ENCODE measurements at regions of chr7 and their contacts with region 1.

Region 1: GRCh38 chr7:31122649-31123058 is 70.5 kb downstream of the ADCYAP1R1 start:
- DNase-seq: peak; percentile 86
- H3K4me3 ChIP-seq: no peak overlapping the region
- H3K27ac ChIP-seq: no peak overlapping the region
- H3K4me1 ChIP-seq: peaks cover 0 to 9% (median 0%) of the 10 kb centered on the region in 4 donors
- H3K27me3 ChIP-seq: no peaks in the 10 kb centered on the region
- CTCF ChIP-seq: peak; percentile 49 to 76 (median 69)
- EP300 ChIP-seq: no peak
- POLR2A ChIP-seq: no peak

Region 2: GRCh38 chr7:30938435-30939316 is 184.0 kb before region 1 on chr7:
- intact Hi-C with region 1: loop called (anchors 5 kb)
- DNase-seq: peak; percentile 89
- H3K4me3 ChIP-seq: peak overlapping the region in 2 of 4 donors; percentile 7 to 9
- H3K27ac ChIP-seq: no peak overlapping the region
- H3K4me1 ChIP-seq: peaks cover 0 to 7% (median 2%) of the 10 kb centered on the region in 4 donors
- H3K27me3 ChIP-seq: no peaks in the 10 kb centered on the region
- CTCF ChIP-seq: peak; percentile 54 to 98 (median 88)
- EP300 ChIP-seq: no peak
- POLR2A ChIP-seq: no peak

Region 3: GRCh38 chr7:30983042-30983913 is 139.4 kb before region 1 on chr7:
- intact Hi-C with region 1: loop called (anchors 1 kb)
- DNase-seq: peak; percentile 90
- H3K4me3 ChIP-seq: no peak overlapping the region
- H3K27ac ChIP-seq: no peak overlapping the region
- H3K4me1 ChIP-seq: peaks cover 0 to 11% (median 2%) of the 10 kb centered on the region in 4 donors
- H3K27me3 ChIP-seq: peaks cover 0 to 7% (median 0%) of the 10 kb centered on the region in 3 donors
- CTCF ChIP-seq: peak; percentile 64 to 97 (median 77)
- EP300 ChIP-seq: no peak
- POLR2A ChIP-seq: no peak

Measured in sigmoid colon (tissue), 7 donors.